Heart right ventricle (tissue), 16 donors: ENCODE measurements at regions of chr3 and their contacts with region 1.

Region 1: GRCh38 chr3:49906004-49906743 is 2.5 kb upstream of the MST1R start:
- DNase-seq: peak; percentile 49 to 54
- ATAC-seq: peak; percentile 49 to 83 (median 60)
- H3K4me3 ChIP-seq: peak overlapping the region in 8 of 10 donors; percentile 0 to 41 (median 34)
- H3K27ac ChIP-seq: peak overlapping the region in 8 of 10 donors; percentile 37 to 71 (median 65)
- H3K4me1 ChIP-seq: peaks cover 8 to 52% (median 31%) of the 10 kb centered on the region in 9 donors
- H3K27me3 ChIP-seq: no peaks in the 10 kb centered on the region
- CTCF ChIP-seq: peak; percentile 50 to 90 (median 69)

Region 2: DNA sequence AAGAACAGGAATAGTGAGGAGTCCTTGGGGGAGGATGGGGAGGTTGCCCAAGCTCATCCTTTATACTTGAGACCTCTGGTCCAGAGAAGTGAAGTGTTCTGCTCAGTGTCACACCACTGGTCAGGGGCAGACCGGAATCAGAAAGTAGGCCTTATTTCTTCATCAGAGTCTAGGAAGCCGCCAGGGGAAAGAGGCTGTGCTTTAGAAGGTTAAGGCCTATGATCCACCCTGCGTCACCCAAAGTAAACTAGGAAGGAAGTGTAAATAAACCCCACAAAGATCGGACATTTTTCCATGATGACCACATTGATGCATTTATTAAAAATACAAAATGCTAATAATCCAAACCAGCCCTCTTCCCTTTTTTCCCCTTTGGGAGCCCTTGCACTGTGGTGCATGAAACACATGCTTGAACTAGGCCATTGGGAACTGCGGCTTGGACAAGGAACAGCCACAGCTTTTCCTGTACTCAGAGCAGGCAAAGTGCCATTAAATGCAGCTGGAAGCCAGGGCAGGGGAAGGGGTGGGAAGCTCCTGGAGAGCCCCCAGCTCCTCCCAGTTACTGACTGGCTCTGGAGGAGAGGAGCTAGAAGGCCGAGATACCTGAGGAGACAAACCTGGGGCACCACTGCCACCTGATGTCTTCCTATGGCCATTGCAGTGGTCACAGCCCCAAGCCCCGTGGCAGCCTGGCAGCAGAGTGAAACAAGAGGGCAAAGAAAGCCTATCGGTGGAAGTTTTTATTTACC is 1754.9 kb before region 1 on chr3:
- intact Hi-C with region 1: no loop called
- DNase-seq: peak; percentile 76 to 81
- ATAC-seq: peak; percentile 93 to 98 (median 96)
- H3K4me3 ChIP-seq: peak overlapping the region in 1 of 10 donors; percentile 7
- H3K27ac ChIP-seq: peak overlapping the region; percentile 12 to 73 (median 58)
- H3K4me1 ChIP-seq: peaks cover 5 to 21% (median 18%) of the 10 kb centered on the region in 9 donors
- H3K27me3 ChIP-seq: no peaks in the 10 kb centered on the region
- CTCF ChIP-seq: peak; percentile 54 to 94 (median 85)

Region 3: DNA sequence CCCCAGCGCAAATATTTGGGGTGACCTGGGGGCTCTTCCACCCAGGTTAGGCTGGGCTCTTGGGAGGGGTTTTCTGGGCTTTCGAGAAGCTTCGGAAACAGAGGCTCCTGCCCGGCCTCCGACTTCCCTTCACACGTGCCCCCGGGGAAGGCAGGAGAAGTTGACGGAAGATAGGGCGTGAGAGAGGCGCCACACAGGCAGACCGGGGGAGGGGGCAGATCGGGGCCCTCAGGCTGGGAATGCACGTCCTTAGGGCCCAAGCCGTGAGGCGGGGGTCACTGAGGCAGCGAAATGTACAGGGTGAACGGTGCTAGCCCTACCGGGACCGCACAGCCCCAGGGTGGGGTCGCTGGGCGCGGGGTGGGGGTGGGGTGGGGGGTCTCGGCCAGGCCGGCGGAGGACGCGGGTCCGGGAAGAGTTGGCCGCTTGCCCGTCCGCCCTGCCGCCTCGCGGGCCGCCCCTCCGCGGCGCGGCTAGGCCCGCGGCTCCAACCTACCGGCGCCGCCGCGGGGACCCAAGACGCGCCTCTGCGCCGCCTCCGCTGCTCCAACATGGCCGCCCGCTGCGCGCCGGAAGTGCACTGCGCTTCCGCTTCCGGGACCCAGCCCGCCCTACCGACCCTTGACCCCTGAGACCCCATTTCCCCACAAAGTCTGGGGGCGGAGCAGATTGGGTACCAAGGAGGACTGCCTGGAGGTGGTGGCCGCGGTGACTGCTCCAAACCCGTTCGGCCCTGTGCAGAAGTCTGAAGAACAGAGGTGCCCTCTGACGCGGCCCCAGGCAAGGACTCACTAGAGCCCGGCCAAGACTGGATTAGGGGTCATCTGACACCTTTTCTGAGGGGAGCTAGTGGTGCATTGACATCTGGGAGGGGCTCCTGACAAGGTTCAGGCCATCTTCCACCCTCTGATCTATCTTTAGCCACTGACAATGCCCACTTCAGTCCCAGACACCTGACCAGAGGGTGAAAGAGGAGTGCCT is 740.1 kb before region 1 on chr3 and contains the start of gene CCDC71:
- intact Hi-C with region 1: no loop called
- DNase-seq: peak; percentile 83 to 84
- ATAC-seq: peak; percentile 59 to 83 (median 73)
- H3K4me3 ChIP-seq: peak within 1 kb of the TSS; percentile 43 to 94 (median 84)
- H3K27ac ChIP-seq: peak within 1 kb of the TSS; percentile 74 to 97 (median 94)
- H3K4me1 ChIP-seq: peaks cover 3 to 34% (median 27%) of the 10 kb centered on the region in 9 donors
- H3K27me3 ChIP-seq: no peaks in the 10 kb centered on the region
- CTCF ChIP-seq: no peak
- total RNA-seq, gene CCDC71: 10.4 to 16.9 (median 12.3) TPM

Region 4: DNA sequence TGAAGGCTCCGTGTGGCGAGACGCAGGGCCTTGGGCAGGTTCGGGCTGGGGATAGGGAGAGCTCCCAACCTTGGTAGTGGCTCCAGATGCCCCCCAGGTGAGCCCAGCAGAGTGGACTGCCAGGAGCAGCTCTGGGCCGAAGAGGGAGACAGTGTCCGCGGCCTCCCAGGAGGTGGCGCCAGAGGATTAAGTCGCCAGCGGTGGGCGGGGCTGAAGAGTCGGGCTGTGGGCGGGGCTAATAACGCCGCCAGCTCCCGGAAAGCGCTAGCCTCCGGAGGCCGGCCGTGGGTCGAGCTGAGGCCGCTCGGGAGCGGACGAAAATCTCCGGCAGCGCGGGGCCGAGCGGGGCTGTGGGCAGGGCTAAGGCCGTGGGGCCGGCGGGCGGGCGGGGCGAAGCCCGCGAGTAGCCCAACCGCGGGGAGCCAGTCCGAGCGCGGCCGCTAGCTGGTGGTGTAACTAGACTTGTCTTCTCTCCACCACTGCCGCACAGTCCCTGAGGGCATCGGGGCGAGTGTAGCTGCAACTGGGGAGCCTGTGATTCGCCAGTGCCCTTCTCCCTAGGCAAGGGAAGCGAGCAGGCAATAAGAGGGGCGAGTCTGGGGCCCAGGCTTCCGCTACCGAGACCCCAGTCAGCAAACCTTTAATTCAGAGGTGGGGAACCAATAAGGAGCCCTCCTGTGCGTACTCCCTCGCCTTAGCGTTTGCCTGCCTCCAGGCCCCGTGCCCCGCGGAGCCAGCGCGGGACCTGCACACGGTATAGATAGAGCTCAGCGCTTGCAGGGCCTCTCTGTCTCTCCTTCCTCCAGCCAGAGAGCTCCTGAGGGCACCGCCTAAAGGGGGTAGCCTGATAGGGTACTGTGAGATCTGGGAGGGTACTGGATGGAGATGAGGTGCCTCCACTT is 366.3 kb before region 1 on chr3:
- intact Hi-C with region 1: loop called in 1 of 10 experiments (anchors 5 kb)
- DNase-seq: peak; percentile 92 to 96
- ATAC-seq: peak; percentile 97 to 99 (median 98)
- H3K4me3 ChIP-seq: peak overlapping the region in 9 of 10 donors; percentile 44 to 78 (median 58)
- H3K27ac ChIP-seq: peak overlapping the region in 9 of 10 donors; percentile 72 to 89 (median 82)
- H3K4me1 ChIP-seq: peaks cover 0 to 15% (median 6%) of the 10 kb centered on the region in 9 donors
- H3K27me3 ChIP-seq: peaks cover 0 to 3% (median 0%) of the 10 kb centered on the region in 7 donors
- CTCF ChIP-seq: peak; percentile 85 to 94 (median 91)

Region 5: GRCh38 chr3:49607796-49608195 is 298.4 kb before region 1 on chr3:
- intact Hi-C with region 1: no loop called
- DNase-seq: no peak
- ATAC-seq: no peak
- H3K4me3 ChIP-seq: no peak overlapping the region
- H3K27ac ChIP-seq: no peak overlapping the region
- H3K4me1 ChIP-seq: peaks cover 0 to 25% (median 5%) of the 10 kb centered on the region in 9 donors
- H3K27me3 ChIP-seq: no peaks in the 10 kb centered on the region
- CTCF ChIP-seq: peak in 2 of 9 donors; percentile 11 to 25

Region 6: GRCh38 chr3:49703443-49703927 is 202.7 kb before region 1 on chr3:
- intact Hi-C with region 1: loop called in 6 of 10 experiments (anchors 5 to 10 kb)
- DNase-seq: peak; percentile 44
- ATAC-seq: peak; percentile 61 to 76 (median 67)
- H3K4me3 ChIP-seq: no peak overlapping the region
- H3K27ac ChIP-seq: no peak overlapping the region
- H3K4me1 ChIP-seq: peaks cover 0 to 23% (median 0%) of the 10 kb centered on the region in 9 donors
- H3K27me3 ChIP-seq: no peaks in the 10 kb centered on the region
- CTCF ChIP-seq: peak; percentile 47 to 85 (median 80)

Region 7: GRCh38 chr3:49723628-49724551 is 182.3 kb before region 1 on chr3 and contains the start of gene GMPPB:
- intact Hi-C with region 1: loop called in 1 of 10 experiments (anchors 10 kb)
- DNase-seq: peak; percentile 97 to 98
- ATAC-seq: peak; percentile 87 to 93 (median 92)
- H3K4me3 ChIP-seq: peak within 1 kb of the TSS; percentile 68 to 100 (median 94)
- H3K27ac ChIP-seq: peak within 1 kb of the TSS; percentile 53 to 98 (median 93)
- H3K4me1 ChIP-seq: peaks cover 12 to 44% (median 30%) of the 10 kb centered on the region in 9 donors
- H3K27me3 ChIP-seq: no peaks in the 10 kb centered on the region
- CTCF ChIP-seq: no peak
- total RNA-seq, gene GMPPB: 9.6 to 30.4 (median 12.9) TPM

Region 8: GRCh38 chr3:49802719-49803464 is 103.3 kb before region 1 on chr3 and contains the start of gene INKA1:
- intact Hi-C with region 1: loop called in 9 of 10 experiments (anchors 1 to 5 kb)
- DNase-seq: peak; percentile 90 to 94
- ATAC-seq: peak; percentile 78 to 87 (median 83)
- H3K4me3 ChIP-seq: peak within 1 kb of the TSS; percentile 55 to 99 (median 89)
- H3K27ac ChIP-seq: peak within 1 kb of the TSS; percentile 68 to 99 (median 97)
- H3K4me1 ChIP-seq: peaks cover 34 to 52% (median 45%) of the 10 kb centered on the region in 9 donors
- H3K27me3 ChIP-seq: no peaks in the 10 kb centered on the region
- CTCF ChIP-seq: peak; percentile 89 to 97 (median 92)
- total RNA-seq, gene INKA1: 1.8 to 5.7 (median 2.5) TPM

Region 9: DNA sequence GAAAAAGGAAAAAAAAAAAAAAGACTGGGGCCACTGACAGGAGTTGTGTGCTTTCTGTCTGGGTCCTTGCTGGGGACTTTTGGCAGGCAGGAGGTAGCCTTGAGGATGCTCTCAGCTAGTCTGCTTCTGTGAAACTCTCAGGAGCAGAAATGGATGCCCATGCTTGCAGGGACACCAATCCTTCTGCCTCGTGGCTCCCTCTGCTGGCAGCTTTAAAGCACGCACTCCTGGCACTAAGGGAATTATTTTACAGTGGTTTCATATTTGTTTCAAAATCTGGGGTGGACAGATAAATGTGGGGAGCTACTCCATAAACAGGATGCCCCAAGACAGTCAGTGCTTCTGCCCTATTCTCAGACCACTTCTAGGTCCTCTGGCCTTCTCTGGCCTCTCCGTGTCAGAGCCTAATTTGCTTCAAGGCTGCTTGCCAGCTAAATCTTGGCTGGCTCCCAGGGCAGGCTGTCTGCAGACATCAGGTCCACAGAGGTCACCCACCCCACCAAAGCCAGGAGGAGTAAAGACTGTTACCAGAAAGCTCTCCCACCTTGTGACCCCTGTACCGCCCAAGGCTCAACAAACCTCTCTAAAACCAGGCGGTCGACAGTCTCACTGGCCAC is 66.9 kb before region 1 on chr3:
- intact Hi-C with region 1: loop called in 9 of 10 experiments (anchors 1 to 10 kb)
- DNase-seq: peak; percentile 82 to 84
- ATAC-seq: peak; percentile 76 to 91 (median 84)
- H3K4me3 ChIP-seq: no peak overlapping the region
- H3K27ac ChIP-seq: peak overlapping the region in 8 of 10 donors; percentile 39 to 70 (median 58)
- H3K4me1 ChIP-seq: peaks cover 12 to 43% (median 28%) of the 10 kb centered on the region in 9 donors
- H3K27me3 ChIP-seq: no peaks in the 10 kb centered on the region
- CTCF ChIP-seq: peak; percentile 85 to 95 (median 91)

Region 10: DNA sequence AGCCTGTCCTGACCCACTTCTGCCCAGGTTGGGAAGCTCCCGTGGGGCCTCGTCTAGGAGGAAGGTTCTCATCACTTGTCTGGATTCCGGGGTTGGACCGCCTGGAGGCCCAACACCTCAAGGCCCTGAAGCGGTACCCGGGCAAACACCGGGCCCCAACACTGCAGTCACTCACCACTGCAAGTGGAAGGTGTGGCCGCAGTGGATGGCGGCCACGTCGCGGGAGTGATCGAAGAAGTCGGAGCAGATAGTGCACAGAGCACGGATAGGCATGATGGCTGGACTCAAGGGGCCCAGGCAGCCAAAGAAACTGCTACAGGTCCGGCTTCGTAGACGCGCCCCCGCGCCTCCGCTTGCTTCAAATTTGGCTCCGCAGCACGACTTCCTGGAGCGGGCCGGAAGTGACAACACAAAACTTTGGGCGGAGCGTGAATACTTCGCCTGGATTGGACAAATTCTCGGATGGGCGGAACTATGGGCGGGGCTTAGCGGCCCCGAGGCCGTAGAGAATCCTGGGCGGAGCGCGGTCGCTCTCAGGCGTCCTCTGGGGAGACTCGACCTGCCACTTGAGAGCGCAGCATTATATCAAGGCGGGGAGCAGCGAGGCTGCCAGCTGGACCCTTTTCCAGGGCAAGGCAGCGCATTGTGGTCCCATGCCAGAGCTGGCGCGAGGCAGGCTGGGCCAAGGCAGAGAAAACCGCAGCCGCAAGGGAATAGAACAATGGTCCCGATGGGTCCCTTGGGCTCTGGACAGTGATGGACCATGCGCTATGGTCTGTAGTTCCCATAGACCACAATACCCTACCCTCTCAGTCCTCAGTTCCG is 49.8 kb before region 1 on chr3 and contains the start of gene TRAIP:
- intact Hi-C with region 1: loop called in 5 of 10 experiments (anchors 5 to 10 kb)
- DNase-seq: peak; percentile 93 to 95
- ATAC-seq: peak; percentile 98 to 100 (median 99)
- H3K4me3 ChIP-seq: peak within 1 kb of the TSS; percentile 1 to 81 (median 66)
- H3K27ac ChIP-seq: peak within 1 kb of the TSS; percentile 50 to 92 (median 82)
- H3K4me1 ChIP-seq: peaks cover 3 to 16% (median 14%) of the 10 kb centered on the region in 9 donors
- H3K27me3 ChIP-seq: no peaks in the 10 kb centered on the region
- CTCF ChIP-seq: peak in 3 of 9 donors; percentile 17 to 29 (median 26)
- total RNA-seq, gene TRAIP: 0.20 to 2.4 (median 1.4) TPM